Sciatic nerve (tissue), 2 donors: ENCODE measurements at regions of chr11 and their contacts with region 1.

Region 1: DNA sequence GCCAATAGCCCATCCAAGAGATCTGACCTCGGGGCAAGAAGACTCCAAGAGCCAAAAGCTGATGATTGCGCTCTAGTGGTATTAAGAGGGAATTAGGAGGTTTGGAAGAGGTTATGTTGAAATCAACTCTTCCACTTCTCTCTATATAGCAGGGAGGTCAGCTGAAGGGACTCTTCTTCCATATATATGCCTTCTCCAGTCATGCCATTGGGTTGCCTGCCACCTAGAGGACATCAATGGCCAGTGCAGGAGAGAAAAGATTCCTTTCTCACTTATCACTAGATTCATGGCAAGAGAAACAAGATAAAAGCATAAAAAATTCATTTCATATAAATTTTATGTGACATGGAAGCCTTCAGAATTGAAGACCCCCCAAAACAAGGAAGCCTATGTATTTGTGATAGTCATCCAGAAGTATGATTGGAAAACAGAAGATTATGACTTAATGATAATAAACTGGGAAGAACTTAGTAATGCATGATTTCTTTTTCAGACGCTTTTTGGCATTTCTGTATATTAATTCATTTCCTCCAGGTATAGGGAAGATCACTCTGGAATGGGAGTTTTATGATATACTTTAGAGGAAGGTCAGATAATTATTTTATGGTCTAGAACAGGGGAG is 435.1 kb upstream of the DDI1 start:
- DNase-seq: no peak
- ATAC-seq: peak; percentile 56

Region 2: GRCh38 chr11:102940714-102941588 is 660.4 kb before region 1 on chr11:
- intact Hi-C with region 1: loop called (anchors 5 kb)
- DNase-seq: no peak
- ATAC-seq: peak; percentile 60

Region 3: DNA sequence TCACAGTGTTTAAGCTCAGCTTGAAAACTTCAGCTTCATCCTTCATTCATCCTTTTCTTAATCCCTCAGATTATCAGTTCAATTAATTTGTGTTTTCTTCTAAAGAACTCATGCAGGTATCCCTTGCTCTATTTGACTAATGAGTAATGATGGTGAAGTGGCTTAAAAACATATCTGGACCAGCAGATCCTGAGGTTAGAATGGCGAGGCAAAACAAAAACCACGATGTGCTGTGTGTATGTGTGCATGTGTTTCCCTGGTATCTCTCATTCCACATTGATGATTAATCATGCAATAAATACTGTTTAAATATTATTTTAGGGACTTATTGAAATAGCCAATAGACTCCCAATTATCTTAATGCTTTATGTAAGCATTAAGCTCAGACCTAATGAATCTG is 55.1 kb before region 1 on chr11:
- intact Hi-C with region 1: no loop called
- DNase-seq: no peak
- ATAC-seq: no peak